Motor neuron (in vitro differentiated cells): ENCODE measurements at regions of chr10 and their contacts with region 1.

Region 1: GRCh38 chr10:92914478-92915325 is 66.4 kb downstream of the EXOC6 start:
- ATAC-seq: peak in 6 of 8 experiments; percentile 45 to 87 (median 75)
- H3K4me3 ChIP-seq: no peak overlapping the region
- H3K27ac ChIP-seq: no peak overlapping the region
- H3K4me1 ChIP-seq: no peaks in the 10 kb centered on the region

Region 2: DNA sequence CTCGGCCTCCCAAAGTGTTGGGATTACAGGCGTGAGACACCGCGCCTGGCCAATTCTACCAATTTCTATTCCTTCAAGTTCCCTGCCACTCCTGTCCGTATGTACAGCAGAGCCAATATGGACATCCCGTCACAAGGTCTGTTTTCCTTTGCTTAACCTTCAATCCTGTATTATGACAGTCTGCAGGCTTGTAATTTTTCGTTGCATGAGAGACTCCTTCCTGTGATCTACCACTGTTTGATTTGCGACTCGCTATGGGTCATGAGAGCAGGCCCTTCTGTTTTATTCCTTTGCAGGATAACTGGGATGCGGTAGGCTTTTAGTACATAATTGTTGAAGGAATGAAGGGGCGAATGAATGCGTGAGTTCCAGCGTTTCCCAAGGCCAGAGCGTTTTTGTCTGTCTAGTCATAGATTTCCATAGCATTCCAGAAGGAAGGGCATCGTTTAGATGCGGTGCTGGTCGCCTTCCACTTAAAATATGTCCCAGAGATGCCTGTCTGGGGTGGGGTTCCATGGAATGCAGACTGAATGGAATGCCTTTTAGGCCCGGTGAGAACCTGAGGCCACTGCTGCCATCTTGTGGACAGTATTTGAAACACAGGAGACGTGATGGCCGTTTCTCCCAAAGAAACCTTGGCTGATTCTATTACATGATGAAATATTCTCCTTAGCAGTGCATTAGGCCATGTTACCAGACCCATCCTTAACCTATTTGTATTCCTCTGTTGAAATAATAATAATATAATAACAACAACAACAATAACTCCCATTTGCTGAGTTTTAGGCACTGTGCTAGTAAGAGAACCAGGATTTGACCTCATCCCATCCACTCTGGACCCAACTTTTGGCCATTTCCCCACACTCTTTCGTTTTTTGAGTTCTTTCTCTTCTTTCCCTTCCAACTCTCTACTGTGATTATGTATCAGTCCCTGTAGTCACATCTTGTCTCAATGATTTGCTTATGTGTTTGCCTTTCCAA is 374.2 kb after region 1 on chr10:
- in situ Hi-C with region 1: loop called in 1 of 9 experiments (anchors 25 kb)
- ATAC-seq: peak; percentile 49 to 97 (median 70)
- H3K4me3 ChIP-seq: no peak overlapping the region
- H3K27ac ChIP-seq: no peak overlapping the region
- H3K4me1 ChIP-seq: no peaks in the 10 kb centered on the region